A673 (cell line): ENCODE measurements at regions of chr2 and their contacts with region 1.

Region 1: DNA sequence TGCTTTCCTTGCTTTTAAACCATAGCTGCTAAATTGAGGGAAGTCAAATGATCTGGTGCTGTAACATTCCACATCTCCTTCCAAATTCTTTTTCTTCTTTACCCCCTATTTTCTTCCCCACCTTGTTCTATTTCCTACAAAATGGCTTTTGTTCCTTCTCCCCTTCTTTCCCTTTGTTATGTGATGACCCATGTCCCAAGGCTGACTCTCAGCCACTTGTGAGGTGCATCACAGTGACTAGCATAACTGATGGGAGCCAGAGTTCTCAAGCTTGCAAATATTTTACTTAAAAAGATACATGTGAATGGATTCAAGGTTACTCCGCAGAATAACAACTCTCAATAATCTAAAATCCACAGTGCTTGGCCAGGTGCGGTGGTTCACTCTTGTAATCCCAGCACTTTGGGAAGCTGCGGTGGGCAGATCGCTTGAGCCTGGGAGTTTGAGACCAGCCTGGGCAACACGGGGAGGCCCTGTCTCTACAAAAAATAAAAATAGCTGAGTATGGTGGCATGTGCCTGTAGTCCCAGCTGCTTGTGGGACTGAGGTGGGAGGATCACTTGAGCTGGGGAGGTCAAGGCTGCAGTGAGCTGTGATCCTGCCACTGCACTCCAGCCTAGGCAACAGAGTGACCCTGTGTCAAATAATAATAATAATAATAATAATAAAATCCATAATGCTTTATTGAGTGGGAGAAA is 100.1 kb upstream of the CERS6 start:
- DNase-seq: no peak
- H3K4me3 ChIP-seq: no peak overlapping the region
- H3K27ac ChIP-seq: no peak overlapping the region
- H3K4me1 ChIP-seq: peaks cover 11% of the 10 kb centered on the region
- H3K27me3 ChIP-seq: no peaks in the 10 kb centered on the region
- CTCF ChIP-seq: no peak

Region 2: DNA sequence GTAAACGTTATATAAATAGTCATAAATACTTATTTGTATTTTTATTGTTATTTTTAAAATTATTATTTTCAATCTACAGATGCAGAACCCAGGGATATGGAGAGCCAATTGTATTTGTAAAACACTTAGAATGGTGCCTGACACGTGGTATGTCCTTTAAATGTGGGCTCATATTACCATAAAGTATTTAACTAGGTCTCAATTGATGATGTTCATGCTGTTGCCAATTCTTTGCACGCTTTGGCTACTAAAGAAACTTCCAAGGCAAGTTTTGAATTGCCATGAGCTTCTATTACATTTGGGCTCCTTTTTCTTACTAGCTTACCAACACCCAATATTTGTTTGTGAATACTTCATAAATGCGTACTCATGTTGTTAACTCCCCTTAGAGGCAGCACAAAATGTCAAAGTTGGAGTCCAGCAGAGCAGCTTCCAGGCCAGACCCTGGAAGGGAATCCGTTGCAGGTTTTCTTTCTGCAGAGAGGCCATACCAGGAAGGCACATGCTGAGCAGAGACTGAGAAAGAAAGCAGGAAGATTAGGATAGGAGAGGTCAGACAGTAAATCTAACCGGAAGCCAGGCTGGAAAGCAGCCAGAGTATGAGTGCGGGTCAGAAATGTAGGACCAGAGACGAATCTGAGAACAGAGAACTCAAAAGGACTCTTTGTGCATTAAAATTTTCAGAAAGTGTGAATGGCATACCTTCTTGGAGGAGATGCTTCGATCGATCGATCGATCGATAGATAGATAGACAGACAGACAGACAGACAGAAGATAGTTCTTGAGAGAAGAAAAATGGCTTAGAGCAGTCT is 442.4 kb after region 1 on chr2:
- CTCF ChIA-PET with region 1: no interaction called
- POLR2A ChIA-PET with region 1: no interaction called
- intact Hi-C with region 1: loop called (anchors 1 kb)
- DNase-seq: peak; percentile 64
- H3K4me3 ChIP-seq: no peak overlapping the region
- H3K27ac ChIP-seq: no peak overlapping the region
- H3K4me1 ChIP-seq: peaks cover 16% of the 10 kb centered on the region
- H3K27me3 ChIP-seq: no peaks in the 10 kb centered on the region
- CTCF ChIP-seq: no peak